Mammary epithelial cell (primary cell): ENCODE measurements at regions of chr18 and their contacts with region 1.

Region 1: DNA sequence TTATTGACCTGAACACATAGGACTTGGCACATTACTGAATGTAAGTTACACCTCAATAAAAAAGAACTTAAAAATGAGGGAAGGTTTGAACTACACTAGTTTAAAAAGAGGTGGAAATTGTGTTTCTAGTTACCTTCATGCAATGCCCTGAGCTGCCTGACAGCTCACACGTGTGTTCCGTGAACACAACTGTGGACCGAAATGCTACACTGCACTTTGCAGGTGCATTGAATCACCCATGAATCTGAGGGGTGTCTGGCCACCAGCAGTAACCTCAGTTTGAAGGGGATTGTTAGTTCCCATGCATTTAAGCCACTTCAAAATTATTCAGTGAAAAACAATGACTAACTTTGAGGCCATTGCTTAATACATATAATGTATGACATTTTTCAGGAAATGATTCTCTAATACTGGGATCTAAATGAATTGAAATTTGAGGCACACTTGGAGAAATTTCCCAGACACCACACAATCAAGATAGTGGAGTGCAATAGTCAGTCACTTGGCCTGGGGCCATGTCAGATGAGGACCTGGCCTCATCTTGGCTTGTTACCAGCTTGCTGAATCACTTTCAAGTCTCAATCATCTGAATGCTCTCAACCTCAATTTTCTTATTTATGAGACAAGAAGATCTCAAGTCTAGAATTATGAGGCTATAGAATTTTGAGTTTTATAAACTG is 59.3 kb downstream of the MYL12B start:
- DNase-seq: peak; percentile 96
- H3K4me3 ChIP-seq: no peak overlapping the region
- H3K27ac ChIP-seq: no peak overlapping the region
- H3K4me1 ChIP-seq: peaks cover 17% of the 10 kb centered on the region
- H3K27me3 ChIP-seq: no peaks in the 10 kb centered on the region
- CTCF ChIP-seq: no peak

Region 2: DNA sequence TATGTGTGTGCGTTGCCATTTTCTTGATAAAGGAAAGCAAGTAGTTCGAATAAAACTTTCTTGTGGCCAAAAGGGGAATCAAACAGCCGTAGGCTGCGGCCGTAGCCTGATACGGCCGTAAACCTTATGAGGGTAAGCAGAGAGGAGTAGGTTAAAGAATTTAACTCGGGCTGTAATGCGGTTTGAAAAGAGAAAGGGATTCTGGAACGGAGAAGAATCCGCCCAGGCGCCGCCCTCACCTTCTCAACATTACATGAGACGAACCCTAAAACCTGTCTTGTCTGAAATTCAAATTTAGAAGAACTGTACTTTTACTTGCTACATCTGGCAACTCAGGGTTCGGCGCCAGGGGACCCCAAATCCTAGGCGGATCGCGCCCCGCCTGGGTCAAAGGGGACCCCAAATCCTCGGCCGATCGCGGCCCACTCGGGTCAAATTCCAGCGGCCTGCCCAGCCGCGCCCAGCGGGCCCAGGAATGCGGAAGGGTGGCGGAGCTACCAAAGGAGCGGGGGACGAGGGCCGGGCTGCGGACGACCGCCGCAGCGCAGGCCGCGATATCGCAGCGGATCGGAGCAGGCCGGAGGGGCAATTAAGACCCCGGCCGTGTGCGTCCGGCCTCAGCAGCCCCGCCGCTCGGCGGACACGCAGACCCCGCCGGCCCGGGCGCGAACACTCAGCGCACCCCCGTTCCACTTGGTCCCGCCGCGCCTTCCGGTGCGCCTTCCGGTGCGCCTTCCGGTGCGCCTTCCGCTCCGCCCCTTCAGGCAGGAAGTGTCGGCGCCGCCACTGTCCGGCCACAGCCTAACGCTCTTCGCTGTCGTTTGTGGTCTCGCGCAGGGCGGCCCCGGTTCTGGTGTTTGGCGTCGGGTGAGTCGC is 59.7 kb before region 1 on chr18 and contains the start of gene MYL12B:
- CTCF ChIA-PET with region 1: no interaction called
- dilution Hi-C with region 1: no loop called
- in situ Hi-C with region 1: no loop called
- intact Hi-C with region 1: loop called (anchors 10 kb)
- DNase-seq: peak; percentile 82
- H3K4me3 ChIP-seq: peak within 1 kb of the TSS; percentile 77 to 93 (median 85)
- H3K27ac ChIP-seq: peak within 1 kb of the TSS; percentile 97
- H3K4me1 ChIP-seq: peaks cover 27% of the 10 kb centered on the region
- H3K27me3 ChIP-seq: no peaks in the 10 kb centered on the region
- CTCF ChIP-seq: peak in 1 of 2 donors; percentile 8
- total RNA-seq, gene MYL12B: 464 to 468 TPM

Region 3: GRCh38 chr18:3305354-3305762 is 15.9 kb before region 1 on chr18:
- CTCF ChIA-PET with region 1: no interaction called
- dilution Hi-C with region 1: no loop called
- in situ Hi-C with region 1: no loop called
- intact Hi-C with region 1: loop called (anchors 2 kb)
- DNase-seq: peak; percentile 98
- H3K4me3 ChIP-seq: peak overlapping the region in 2 of 3 experiments; percentile 4 to 23
- H3K27ac ChIP-seq: peak overlapping the region; percentile 96
- H3K4me1 ChIP-seq: peaks cover 23% of the 10 kb centered on the region
- H3K27me3 ChIP-seq: no peaks in the 10 kb centered on the region
- CTCF ChIP-seq: no peak

Region 4: DNA sequence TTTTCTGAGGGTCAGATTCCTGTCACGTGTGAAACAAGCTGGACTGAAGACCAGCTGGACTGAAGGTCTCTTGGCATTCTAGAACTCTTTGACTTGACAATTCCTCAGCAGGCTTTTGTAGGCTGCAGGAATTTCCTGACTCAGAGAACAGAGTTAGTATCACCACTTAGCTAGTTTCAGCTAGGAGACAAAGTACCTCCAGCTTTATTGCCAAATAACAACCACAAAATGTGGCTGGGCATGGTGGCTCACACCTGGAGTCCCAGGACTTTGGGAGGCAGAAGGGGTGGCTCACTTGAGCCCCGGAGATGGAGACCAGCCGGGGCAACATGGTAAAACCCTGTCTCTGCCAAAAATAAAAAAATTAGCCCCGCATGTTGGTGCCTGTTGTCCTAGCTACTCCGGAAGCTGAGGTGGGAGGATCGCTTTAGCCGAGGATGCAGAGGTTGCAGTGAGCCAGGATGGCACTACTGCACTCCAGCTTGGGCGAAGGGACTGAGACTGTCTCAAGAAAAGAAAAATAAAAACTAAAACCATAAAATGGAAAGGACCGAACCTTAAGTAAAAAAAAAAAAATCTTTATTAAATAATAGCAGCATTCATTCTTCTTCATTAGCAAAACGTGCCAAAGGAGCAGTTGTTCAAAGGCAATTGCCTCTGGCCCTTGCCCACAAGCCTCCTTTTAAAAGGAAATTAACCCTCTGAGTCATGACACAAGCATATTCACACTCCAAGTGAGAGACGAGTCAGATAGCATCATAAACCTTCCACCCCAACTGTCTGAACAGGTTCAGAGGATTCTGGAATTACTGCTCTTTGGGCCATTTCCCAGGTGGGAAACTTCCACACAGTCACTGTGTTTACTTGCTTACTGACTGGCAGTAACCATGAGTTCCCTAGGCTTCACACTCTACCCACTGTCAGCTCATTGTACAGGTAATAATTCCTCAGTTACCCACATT is 29.6 kb after region 1 on chr18:
- CTCF ChIA-PET with region 1: no interaction called
- dilution Hi-C with region 1: no loop called
- in situ Hi-C with region 1: no loop called
- intact Hi-C with region 1: loop called (anchors 2 kb)
- DNase-seq: peak; percentile 98
- H3K4me3 ChIP-seq: no peak overlapping the region
- H3K27ac ChIP-seq: peak overlapping the region; percentile 94
- H3K4me1 ChIP-seq: peaks cover 29% of the 10 kb centered on the region
- H3K27me3 ChIP-seq: no peaks in the 10 kb centered on the region
- CTCF ChIP-seq: no peak